ENCODE measurements at regions of chr3 and their contacts with region 1.

Region 1: GRCh38 chr3:78659386-78659987 is 1108.3 kb downstream of the ROBO1 start:
- DNase-seq: peak; percentile 24
- H3K4me3 ChIP-seq: no peak overlapping the region
- H3K27ac ChIP-seq: no peak overlapping the region
- H3K4me1 ChIP-seq: no peaks in the 10 kb centered on the region
- H3K27me3 ChIP-seq: no peaks in the 10 kb centered on the region
- CTCF ChIP-seq: peak; percentile 59

Region 2: GRCh38 chr3:78988324-78988723 is 328.8 kb after region 1 on chr3:
- intact Hi-C with region 1: loop called (anchors 5 kb)
- DNase-seq: no peak
- H3K4me3 ChIP-seq: no peak overlapping the region
- H3K27ac ChIP-seq: no peak overlapping the region
- H3K4me1 ChIP-seq: peaks cover 5% of the 10 kb centered on the region
- H3K27me3 ChIP-seq: no peaks in the 10 kb centered on the region
- CTCF ChIP-seq: peak; percentile 35

Region 3: DNA sequence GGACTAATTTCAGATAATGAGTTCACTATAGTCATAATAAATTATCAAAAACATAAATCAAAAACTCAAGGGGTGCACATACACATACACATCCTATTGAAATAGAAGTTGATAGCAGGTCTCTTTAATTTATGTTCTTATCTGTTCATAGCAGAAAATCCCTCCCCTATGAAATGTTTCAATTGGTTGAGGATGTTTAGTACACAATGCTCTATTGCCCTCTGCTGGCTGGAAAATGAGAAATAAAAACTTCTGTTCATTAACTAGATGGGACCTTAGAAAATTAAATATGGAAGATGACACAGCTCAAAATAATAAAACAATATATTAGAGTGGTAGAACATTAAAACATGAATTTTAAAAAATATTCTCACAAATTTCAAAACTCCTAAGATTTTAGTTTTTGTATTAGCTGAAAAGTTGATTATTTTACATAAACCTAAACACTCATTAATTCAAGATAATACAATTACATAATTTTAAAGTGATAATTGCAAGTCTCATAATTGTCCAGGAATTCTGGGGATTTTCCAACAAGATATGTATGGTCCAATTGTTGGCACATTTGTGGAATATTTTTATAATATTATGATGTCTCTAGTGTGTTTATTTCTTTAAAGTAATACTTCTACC is 373.3 kb after region 1 on chr3:
- intact Hi-C with region 1: loop called (anchors 2 kb)
- DNase-seq: no peak
- H3K4me3 ChIP-seq: no peak overlapping the region
- H3K27ac ChIP-seq: no peak overlapping the region
- H3K4me1 ChIP-seq: no peaks in the 10 kb centered on the region
- H3K27me3 ChIP-seq: no peaks in the 10 kb centered on the region
- CTCF ChIP-seq: peak; percentile 37

Measured in colonic mucosa (tissue), 4 donors.